GM12878 (cell line): ENCODE measurements at regions of chr3 and their contacts with region 1.

Region 1: GRCh38 chr3:13045904-13046568 is 27.2 kb downstream of the IQSEC1 start:
- DNase-seq: peak; percentile 76
- ATAC-seq: peak; percentile 87
- H3K4me3 ChIP-seq: no peak overlapping the region
- H3K27ac ChIP-seq: peak overlapping the region; percentile 70
- H3K4me1 ChIP-seq: peaks cover 34% of the 10 kb centered on the region
- H3K27me3 ChIP-seq: no peaks in the 10 kb centered on the region
- CTCF ChIP-seq: 0 out of 6 replicates have a peak, but pooled peaks of 1 of the 3 experiments have one; percentile 9
- EP300 ChIP-seq: peak; percentile 40 to 54; a peak in 2 of 4 replicates
- POLR2A ChIP-seq: peak; percentile 70
- RAD21 ChIP-seq: no peak

Region 2: DNA sequence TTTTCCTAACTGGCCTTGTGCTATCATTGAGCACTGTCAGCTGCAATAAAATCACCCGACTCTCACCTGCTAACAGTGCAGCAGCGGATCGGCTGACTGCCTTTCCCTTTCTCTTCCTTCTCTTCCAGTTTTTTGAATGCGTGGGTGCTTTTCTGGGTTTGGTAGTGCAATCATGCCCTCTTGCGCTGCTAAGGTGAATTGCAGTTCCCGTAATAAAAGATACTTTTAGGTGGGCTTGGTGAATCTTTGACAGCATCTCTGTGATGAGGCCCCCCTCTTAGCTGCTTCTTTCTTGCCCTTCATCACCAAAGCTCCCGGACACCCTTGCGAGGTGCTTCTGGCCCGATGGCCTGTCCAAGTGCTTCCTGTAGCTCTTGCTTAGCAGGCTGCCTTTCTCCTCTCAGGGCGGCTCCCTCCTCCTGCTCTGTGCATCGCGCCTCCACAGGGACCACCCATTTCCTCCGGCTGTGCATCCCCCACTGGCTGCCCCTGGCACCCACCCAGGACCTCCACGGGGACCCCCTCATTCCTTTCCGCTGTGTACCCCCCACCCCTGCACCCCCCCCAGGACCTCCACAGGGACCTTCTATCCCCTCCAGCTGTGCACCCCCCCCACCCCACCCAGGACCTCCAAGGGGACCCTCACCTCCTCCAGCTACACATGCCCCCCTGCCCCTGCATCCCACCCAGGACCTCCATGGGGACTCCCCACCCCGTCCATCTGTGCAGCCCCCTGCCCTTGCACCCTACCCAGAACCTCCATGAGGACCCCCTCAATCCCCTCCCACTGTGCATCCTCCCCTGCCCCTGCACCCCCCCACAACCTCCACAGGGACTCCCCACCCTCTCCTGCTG is 153.8 kb before region 1 on chr3:
- CTCF ChIA-PET with region 1: interaction called, 10 read pairs
- POLR2A ChIA-PET with region 1: no interaction called
- RAD21 ChIA-PET with region 1: no interaction called
- SMC1A ChIA-PET with region 1: interaction called, 4 read pairs
- in situ Hi-C with region 1: no loop called
- intact Hi-C with region 1: no loop called
- DNase-seq: no peak
- ATAC-seq: peak; percentile 26
- H3K4me3 ChIP-seq: no peak overlapping the region
- H3K27ac ChIP-seq: no peak overlapping the region
- H3K4me1 ChIP-seq: peaks cover 19% of the 10 kb centered on the region
- H3K27me3 ChIP-seq: no peaks in the 10 kb centered on the region
- CTCF ChIP-seq: peak; percentile 82 to 97 (median 95)
- EP300 ChIP-seq: no peak
- POLR2A ChIP-seq: no peak
- RAD21 ChIP-seq: peak; percentile 98

Region 3: GRCh38 chr3:12994607-12995388 is 51.2 kb before region 1 on chr3:
- CTCF ChIA-PET with region 1: interaction called, 19 read pairs
- POLR2A ChIA-PET with region 1: interaction called, 5 read pairs
- RAD21 ChIA-PET with region 1: interaction called, 14 read pairs
- SMC1A ChIA-PET with region 1: interaction called, 9 read pairs
- in situ Hi-C with region 1: no loop called
- intact Hi-C with region 1: no loop called
- DNase-seq: no peak
- ATAC-seq: peak; percentile 90
- H3K4me3 ChIP-seq: peak overlapping the region; percentile 89
- H3K27ac ChIP-seq: peak overlapping the region; percentile 79
- H3K4me1 ChIP-seq: peaks cover 34% of the 10 kb centered on the region
- H3K27me3 ChIP-seq: no peaks in the 10 kb centered on the region
- CTCF ChIP-seq: peak; percentile 87 to 90 (median 90)
- EP300 ChIP-seq: no peak
- POLR2A ChIP-seq: peak; percentile 75
- RAD21 ChIP-seq: peak; percentile 61

Region 4: GRCh38 chr3:13002398-13003124 is 43.5 kb before region 1 on chr3:
- CTCF ChIA-PET with region 1: interaction called, 6 read pairs
- POLR2A ChIA-PET with region 1: interaction called, 9 read pairs
- RAD21 ChIA-PET with region 1: interaction called, 15 read pairs
- SMC1A ChIA-PET with region 1: interaction called, 12 read pairs
- in situ Hi-C with region 1: no loop called
- intact Hi-C with region 1: no loop called
- DNase-seq: peak; percentile 89
- ATAC-seq: peak; percentile 76
- H3K4me3 ChIP-seq: peak overlapping the region; percentile 14; the same call in 1 of the 2 replicates
- H3K27ac ChIP-seq: peak overlapping the region; percentile 67
- H3K4me1 ChIP-seq: peaks cover 76% of the 10 kb centered on the region
- H3K27me3 ChIP-seq: no peaks in the 10 kb centered on the region
- CTCF ChIP-seq: no peak
- EP300 ChIP-seq: peak; percentile 53 to 74; a peak in 2 of 4 replicates
- POLR2A ChIP-seq: no peak
- RAD21 ChIP-seq: no peak

Region 5: DNA sequence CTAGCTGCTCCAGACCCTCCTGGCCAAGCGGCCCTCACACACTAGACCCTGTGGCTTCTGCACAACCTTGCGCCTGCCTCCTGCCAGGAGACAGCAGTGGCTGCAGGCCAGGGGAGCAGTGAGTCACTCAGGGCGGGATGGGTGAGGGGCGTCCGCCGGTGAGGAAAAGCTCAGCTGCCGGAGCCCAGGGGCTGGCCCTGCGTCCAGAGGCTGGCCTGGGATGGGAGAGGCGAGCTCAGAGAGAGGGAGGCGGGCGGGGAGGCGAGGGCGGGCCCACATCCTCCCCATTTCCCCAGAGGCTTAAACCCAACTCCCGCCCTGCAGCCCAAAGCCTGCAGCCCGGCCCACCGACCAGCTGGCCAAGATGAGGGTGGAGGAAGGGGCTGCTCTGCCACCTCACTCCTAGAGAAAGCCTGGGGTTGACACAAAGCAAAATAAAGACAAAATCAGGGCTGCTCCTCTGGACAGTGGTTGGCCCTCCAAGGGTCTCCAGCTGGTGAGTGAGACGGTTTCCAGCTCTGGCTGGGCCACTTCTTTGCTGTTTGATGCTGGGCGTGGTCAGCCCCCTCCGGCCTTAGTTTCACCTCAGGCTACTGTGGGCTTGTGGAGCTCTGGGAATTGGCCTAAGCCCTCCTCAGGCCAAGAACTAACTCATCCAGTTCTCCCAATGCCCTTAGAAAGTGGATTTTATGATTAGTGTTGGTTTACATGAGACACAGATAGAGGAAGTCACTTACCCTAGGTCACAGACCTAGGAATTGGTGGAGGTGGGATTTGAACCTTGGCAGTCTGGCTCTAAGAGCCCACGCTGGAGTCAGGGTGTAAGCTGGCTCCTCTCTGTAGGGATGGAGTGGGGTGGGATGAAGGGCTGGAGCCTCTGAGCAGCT is 23.4 kb before region 1 on chr3:
- CTCF ChIA-PET with region 1: interaction called, 21 read pairs
- POLR2A ChIA-PET with region 1: interaction called, 58 read pairs
- RAD21 ChIA-PET with region 1: interaction called, 33 read pairs
- SMC1A ChIA-PET with region 1: interaction called, 51 read pairs
- in situ Hi-C with region 1: no loop called
- intact Hi-C with region 1: no loop called
- DNase-seq: no peak
- ATAC-seq: peak; percentile 72
- H3K4me3 ChIP-seq: peak overlapping the region; percentile 70
- H3K27ac ChIP-seq: peak overlapping the region; percentile 99
- H3K4me1 ChIP-seq: peaks cover 32% of the 10 kb centered on the region
- H3K27me3 ChIP-seq: no peaks in the 10 kb centered on the region
- CTCF ChIP-seq: no peak
- EP300 ChIP-seq: no peak
- POLR2A ChIP-seq: no peak
- RAD21 ChIP-seq: no peak

Region 6: GRCh38 chr3:13073326-13074005 is 27.4 kb after region 1 on chr3 and contains the start of gene IQSEC1:
- CTCF ChIA-PET with region 1: interaction called, 3 read pairs
- POLR2A ChIA-PET with region 1: interaction called, 14 read pairs
- RAD21 ChIA-PET with region 1: interaction called, 11 read pairs
- SMC1A ChIA-PET with region 1: interaction called, 11 read pairs
- in situ Hi-C with region 1: no loop called
- intact Hi-C with region 1: no loop called
- DNase-seq: no peak
- ATAC-seq: peak; percentile 67
- H3K4me3 ChIP-seq: peak within 1 kb of the TSS; percentile 77
- H3K27ac ChIP-seq: no peak within 1 kb of the TSS
- H3K4me1 ChIP-seq: peaks cover 45% of the 10 kb centered on the region
- H3K27me3 ChIP-seq: peaks cover 0 to 11% of the 10 kb centered on the region in 2 experiments; a peak in 2 of 4 replicates
- CTCF ChIP-seq: 0 out of 6 replicates have a peak, but pooled peaks of 2 of the 3 experiments have one; percentile 1 to 3
- EP300 ChIP-seq: no peak
- POLR2A ChIP-seq: no peak
- RAD21 ChIP-seq: no peak
- polyA plus RNA-seq, gene IQSEC1: 0.92 to 2.0 TPM